Endothelial cell of umbilical vein (primary cell): ENCODE measurements at regions of chr1 and their contacts with region 1.

Region 1: DNA sequence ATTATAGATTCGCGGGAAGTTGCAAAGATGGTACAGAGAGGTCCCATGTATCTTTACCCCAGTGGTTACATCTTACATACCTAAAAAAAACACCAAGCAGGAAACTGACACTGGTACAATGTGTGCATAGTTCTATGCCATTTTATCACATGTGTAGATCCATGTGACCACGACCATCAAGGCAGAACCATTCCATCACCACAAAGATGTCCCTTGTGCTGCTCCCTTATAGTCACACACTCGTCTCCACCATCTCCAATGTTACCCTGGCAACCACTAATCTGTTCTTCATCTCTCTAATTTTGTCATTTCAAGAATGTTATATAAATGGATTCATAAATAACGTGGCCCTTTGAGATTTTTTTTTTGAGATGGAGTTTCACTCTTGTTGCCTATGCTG is 156.9 kb upstream of the MAGI3 start:
- DNase-seq: no peak
- H3K4me3 ChIP-seq: no peak overlapping the region
- H3K27ac ChIP-seq: no peak overlapping the region
- H3K4me1 ChIP-seq: no peaks in the 10 kb centered on the region
- H3K27me3 ChIP-seq: peaks cover 0 to 7% of the 10 kb centered on the region in 2 experiments
- CTCF ChIP-seq: no peak
- POLR2A ChIP-seq: no peak

Region 2: GRCh38 chr1:113219377-113219776 is 14.1 kb before region 1 on chr1:
- CTCF ChIA-PET with region 1: no interaction called
- POLR2A ChIA-PET with region 1: interaction called, 13 read pairs
- dilution Hi-C with region 1: no loop called
- intact Hi-C with region 1: no loop called
- DNase-seq: no peak
- H3K4me3 ChIP-seq: no peak overlapping the region
- H3K27ac ChIP-seq: no peak overlapping the region
- H3K4me1 ChIP-seq: no peaks in the 10 kb centered on the region
- H3K27me3 ChIP-seq: no peaks in the 10 kb centered on the region
- CTCF ChIP-seq: peak in 1 of 2 donors; percentile 20
- POLR2A ChIP-seq: no peak